ENCODE measurements at regions of chr22 and their contacts with region 1.

Region 1: GRCh38 chr22:24325105-24325757 is 54.6 kb downstream of the SPECC1L start:
- DNase-seq: peak; percentile 69 to 78 (median 72)
- H3K4me3 ChIP-seq: no peak overlapping the region
- H3K4me3 Mint-ChIP-seq: no peak overlapping the region
- H3K27ac ChIP-seq: no peak overlapping the region
- H3K27ac Mint-ChIP-seq: peak overlapping the region in 2 of 7 donors; percentile 18 to 69
- H3K4me1 ChIP-seq: peaks cover 6 to 12% of the 10 kb centered on the region in 2 donors
- H3K4me1 Mint-ChIP-seq: peaks cover 13% of the 10 kb centered on the region
- H3K27me3 ChIP-seq: no peaks in the 10 kb centered on the region
- H3K27me3 Mint-ChIP-seq: no peaks in the 10 kb centered on the region
- CTCF ChIP-seq: peak; percentile 84

Region 2: GRCh38 chr22:24208012-24208749 is 117.0 kb before region 1 on chr22:
- intact Hi-C with region 1: no loop called
- DNase-seq: peak; percentile 90 to 98 (median 98)
- H3K4me3 ChIP-seq: peak overlapping the region in 1 of 3 experiments; percentile 49
- H3K4me3 Mint-ChIP-seq: peak overlapping the region in 1 of 2 donors; percentile 55
- H3K27ac ChIP-seq: peak overlapping the region; percentile 86 to 95
- H3K27ac Mint-ChIP-seq: peak overlapping the region; percentile 88 to 99 (median 95)
- H3K4me1 ChIP-seq: peaks cover 44 to 57% of the 10 kb centered on the region in 2 donors
- H3K4me1 Mint-ChIP-seq: peaks cover 48% of the 10 kb centered on the region
- H3K27me3 ChIP-seq: no peaks in the 10 kb centered on the region
- H3K27me3 Mint-ChIP-seq: peaks cover 0 to 4% (median 2%) of the 10 kb centered on the region in 3 donors
- CTCF ChIP-seq: no peak

Region 3: GRCh38 chr22:24367841-24368240 is 42.6 kb after region 1 on chr22:
- intact Hi-C with region 1: no loop called
- DNase-seq: no peak
- H3K4me3 ChIP-seq: no peak overlapping the region
- H3K4me3 Mint-ChIP-seq: no peak overlapping the region
- H3K27ac ChIP-seq: no peak overlapping the region
- H3K27ac Mint-ChIP-seq: no peak overlapping the region
- H3K4me1 ChIP-seq: no peaks in the 10 kb centered on the region
- H3K4me1 Mint-ChIP-seq: peaks cover 6% of the 10 kb centered on the region
- H3K27me3 ChIP-seq: no peaks in the 10 kb centered on the region
- H3K27me3 Mint-ChIP-seq: no peaks in the 10 kb centered on the region
- CTCF ChIP-seq: no peak

Region 4: GRCh38 chr22:24380220-24380904 is 55.1 kb after region 1 on chr22:
- intact Hi-C with region 1: loop called in 1 of 2 experiments (anchors 10 kb)
- DNase-seq: no peak
- H3K4me3 ChIP-seq: no peak overlapping the region
- H3K4me3 Mint-ChIP-seq: no peak overlapping the region
- H3K27ac ChIP-seq: no peak overlapping the region
- H3K27ac Mint-ChIP-seq: no peak overlapping the region
- H3K4me1 ChIP-seq: peaks cover 16 to 30% of the 10 kb centered on the region in 2 donors
- H3K4me1 Mint-ChIP-seq: peaks cover 40% of the 10 kb centered on the region
- H3K27me3 ChIP-seq: no peaks in the 10 kb centered on the region
- H3K27me3 Mint-ChIP-seq: no peaks in the 10 kb centered on the region
- CTCF ChIP-seq: no peak

Region 5: GRCh38 chr22:24402460-24403192 is 77.4 kb after region 1 on chr22:
- intact Hi-C with region 1: loop called in 1 of 2 experiments (anchors 5 kb)
- DNase-seq: peak; percentile 94 to 98 (median 97)
- H3K4me3 ChIP-seq: peak overlapping the region in 1 of 3 experiments; percentile 35
- H3K4me3 Mint-ChIP-seq: peak overlapping the region; percentile 57 to 67
- H3K27ac ChIP-seq: peak overlapping the region; percentile 38 to 82
- H3K27ac Mint-ChIP-seq: peak overlapping the region; percentile 89 to 98 (median 92)
- H3K4me1 ChIP-seq: peaks cover 34% of the 10 kb centered on the region in 2 donors
- H3K4me1 Mint-ChIP-seq: peaks cover 49% of the 10 kb centered on the region
- H3K27me3 ChIP-seq: no peaks in the 10 kb centered on the region
- H3K27me3 Mint-ChIP-seq: peaks cover 2% of the 10 kb centered on the region in 3 donors
- CTCF ChIP-seq: no peak

Region 6: DNA sequence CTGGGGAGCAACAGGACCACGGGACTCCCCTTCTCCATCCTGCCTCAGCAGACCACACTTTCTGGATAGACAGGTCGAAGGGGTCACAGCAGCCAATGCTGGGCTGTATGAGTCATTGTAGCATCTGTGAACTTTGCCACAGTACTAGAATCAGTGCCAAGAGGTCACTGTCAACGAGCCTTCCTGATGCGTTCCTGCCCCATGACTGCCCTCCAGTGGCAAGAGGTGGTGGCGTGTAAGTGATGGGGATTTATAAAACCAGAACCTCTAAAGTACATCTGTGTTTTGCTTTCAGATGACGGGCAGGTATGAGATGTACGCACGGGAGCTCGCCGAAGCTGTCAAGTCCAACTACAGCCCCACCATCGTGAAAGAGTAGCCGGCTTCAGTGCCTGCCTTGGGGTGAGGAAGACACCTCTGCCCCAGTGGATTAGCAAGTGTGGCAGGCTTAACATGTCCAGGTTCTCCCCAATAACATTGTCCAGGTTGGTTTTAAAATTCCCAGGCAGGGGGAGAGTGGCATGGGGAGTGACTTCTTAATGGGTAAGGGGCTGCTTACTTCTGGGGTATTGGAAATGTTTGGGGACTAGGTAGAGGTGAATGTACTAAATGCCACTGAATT is 200.3 kb after region 1 on chr22:
- intact Hi-C with region 1: loop called (anchors 2 to 5 kb)
- DNase-seq: peak; percentile 89 to 96 (median 96)
- H3K4me3 ChIP-seq: no peak overlapping the region
- H3K4me3 Mint-ChIP-seq: no peak overlapping the region
- H3K27ac ChIP-seq: no peak overlapping the region
- H3K27ac Mint-ChIP-seq: peak overlapping the region in 6 of 7 donors; percentile 33 to 85 (median 60)
- H3K4me1 ChIP-seq: peaks cover 10 to 19% of the 10 kb centered on the region in 2 donors
- H3K4me1 Mint-ChIP-seq: peaks cover 28% of the 10 kb centered on the region
- H3K27me3 ChIP-seq: no peaks in the 10 kb centered on the region
- H3K27me3 Mint-ChIP-seq: peaks cover 0 to 1% (median 0%) of the 10 kb centered on the region in 3 donors
- CTCF ChIP-seq: peak; percentile 84

Region 7: GRCh38 chr22:24685531-24686190 is 360.4 kb after region 1 on chr22:
- intact Hi-C with region 1: no loop called
- DNase-seq: no peak
- H3K4me3 ChIP-seq: no peak overlapping the region
- H3K4me3 Mint-ChIP-seq: peak overlapping the region in 1 of 2 donors; percentile 59
- H3K27ac ChIP-seq: no peak overlapping the region
- H3K27ac Mint-ChIP-seq: no peak overlapping the region
- H3K4me1 ChIP-seq: no peaks in the 10 kb centered on the region
- H3K4me1 Mint-ChIP-seq: peaks cover 6% of the 10 kb centered on the region
- H3K27me3 ChIP-seq: peaks cover 29 to 45% of the 10 kb centered on the region in 2 donors
- H3K27me3 Mint-ChIP-seq: peaks cover 43 to 53% (median 51%) of the 10 kb centered on the region in 3 donors
- CTCF ChIP-seq: no peak

Measured in CD14-positive monocyte (primary cell).